CD14-positive monocyte (primary cell): ENCODE measurements at regions of chr2 and their contacts with region 1.

Region 1: GRCh38 chr2:47906157-47907038 is at the start of gene FBXO11:
- DNase-seq: peak; percentile 94 to 97 (median 97)
- H3K4me3 ChIP-seq: peak within 1 kb of the TSS; percentile 75 to 98 (median 90)
- H3K4me3 Mint-ChIP-seq: peak within 1 kb of the TSS; percentile 86 to 95
- H3K27ac ChIP-seq: peak within 1 kb of the TSS; percentile 90 to 95
- H3K27ac Mint-ChIP-seq: peak within 1 kb of the TSS; percentile 93 to 99 (median 97)
- H3K4me1 ChIP-seq: peaks cover 17 to 37% of the 10 kb centered on the region in 2 donors
- H3K4me1 Mint-ChIP-seq: peaks cover 36% of the 10 kb centered on the region
- H3K27me3 ChIP-seq: no peaks in the 10 kb centered on the region
- H3K27me3 Mint-ChIP-seq: peaks cover 0 to 2% (median 1%) of the 10 kb centered on the region in 3 donors
- CTCF ChIP-seq: no peak
- polyA plus RNA-seq, gene FBXO11: 2.2 to 51.3 (median 4.6) TPM

Region 2: GRCh38 chr2:47782671-47783485 is 123.5 kb before region 1 on chr2 and contains the start of gene MSH6:
- intact Hi-C with region 1: loop called (anchors 5 kb)
- DNase-seq: peak; percentile 78 to 88 (median 87)
- H3K4me3 ChIP-seq: peak within 1 kb of the TSS; percentile 82 to 91 (median 89)
- H3K4me3 Mint-ChIP-seq: peak within 1 kb of the TSS; percentile 84 to 92
- H3K27ac ChIP-seq: peak within 1 kb of the TSS; percentile 59 to 88
- H3K27ac Mint-ChIP-seq: peak within 1 kb of the TSS; percentile 78 to 93 (median 88)
- H3K4me1 ChIP-seq: peaks cover 35 to 39% of the 10 kb centered on the region in 2 donors
- H3K4me1 Mint-ChIP-seq: peaks cover 34% of the 10 kb centered on the region
- H3K27me3 ChIP-seq: no peaks in the 10 kb centered on the region
- H3K27me3 Mint-ChIP-seq: peaks cover 0 to 7% (median 0%) of the 10 kb centered on the region in 3 donors
- CTCF ChIP-seq: no peak
- polyA plus RNA-seq, gene MSH6: 4.1 to 6.5 (median 6.0) TPM

Region 3: GRCh38 chr2:47862949-47863348 is 43.4 kb before region 1 on chr2:
- intact Hi-C with region 1: loop called in 1 of 2 experiments (anchors 5 kb)
- DNase-seq: no peak
- H3K4me3 ChIP-seq: no peak overlapping the region
- H3K4me3 Mint-ChIP-seq: no peak overlapping the region
- H3K27ac ChIP-seq: no peak overlapping the region
- H3K27ac Mint-ChIP-seq: peak overlapping the region in 1 of 7 donors; percentile 37
- H3K4me1 ChIP-seq: peaks cover 5 to 11% of the 10 kb centered on the region in 2 donors
- H3K4me1 Mint-ChIP-seq: peaks cover 19% of the 10 kb centered on the region
- H3K27me3 ChIP-seq: no peaks in the 10 kb centered on the region
- H3K27me3 Mint-ChIP-seq: no peaks in the 10 kb centered on the region
- CTCF ChIP-seq: no peak

Region 4: DNA sequence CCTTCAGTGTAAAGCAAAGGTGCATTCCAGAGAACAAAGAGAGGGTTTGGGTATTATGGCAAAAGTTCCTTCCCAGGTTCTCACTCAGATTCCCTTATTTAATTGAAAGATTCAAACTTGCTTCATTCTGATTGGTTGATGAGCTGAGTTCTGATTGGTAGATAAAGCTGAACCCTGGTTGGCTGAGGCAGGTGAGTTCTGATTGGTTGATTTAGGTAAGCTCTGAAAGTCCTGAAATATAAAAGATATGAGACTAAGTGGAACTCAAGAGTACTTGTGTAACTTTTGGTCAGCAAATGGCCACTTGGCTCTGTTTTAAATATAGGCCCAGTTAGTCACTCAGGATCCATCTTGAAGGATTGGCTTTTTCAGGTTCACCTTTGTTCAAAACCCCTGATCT is 99.7 kb after region 1 on chr2:
- intact Hi-C with region 1: no loop called
- DNase-seq: no peak
- H3K4me3 ChIP-seq: no peak overlapping the region
- H3K4me3 Mint-ChIP-seq: no peak overlapping the region
- H3K27ac ChIP-seq: no peak overlapping the region
- H3K27ac Mint-ChIP-seq: no peak overlapping the region
- H3K4me1 ChIP-seq: no peaks in the 10 kb centered on the region
- H3K4me1 Mint-ChIP-seq: no peaks in the 10 kb centered on the region
- H3K27me3 ChIP-seq: no peaks in the 10 kb centered on the region
- H3K27me3 Mint-ChIP-seq: peaks cover 0 to 6% (median 3%) of the 10 kb centered on the region in 3 donors
- CTCF ChIP-seq: no peak

Region 5: DNA sequence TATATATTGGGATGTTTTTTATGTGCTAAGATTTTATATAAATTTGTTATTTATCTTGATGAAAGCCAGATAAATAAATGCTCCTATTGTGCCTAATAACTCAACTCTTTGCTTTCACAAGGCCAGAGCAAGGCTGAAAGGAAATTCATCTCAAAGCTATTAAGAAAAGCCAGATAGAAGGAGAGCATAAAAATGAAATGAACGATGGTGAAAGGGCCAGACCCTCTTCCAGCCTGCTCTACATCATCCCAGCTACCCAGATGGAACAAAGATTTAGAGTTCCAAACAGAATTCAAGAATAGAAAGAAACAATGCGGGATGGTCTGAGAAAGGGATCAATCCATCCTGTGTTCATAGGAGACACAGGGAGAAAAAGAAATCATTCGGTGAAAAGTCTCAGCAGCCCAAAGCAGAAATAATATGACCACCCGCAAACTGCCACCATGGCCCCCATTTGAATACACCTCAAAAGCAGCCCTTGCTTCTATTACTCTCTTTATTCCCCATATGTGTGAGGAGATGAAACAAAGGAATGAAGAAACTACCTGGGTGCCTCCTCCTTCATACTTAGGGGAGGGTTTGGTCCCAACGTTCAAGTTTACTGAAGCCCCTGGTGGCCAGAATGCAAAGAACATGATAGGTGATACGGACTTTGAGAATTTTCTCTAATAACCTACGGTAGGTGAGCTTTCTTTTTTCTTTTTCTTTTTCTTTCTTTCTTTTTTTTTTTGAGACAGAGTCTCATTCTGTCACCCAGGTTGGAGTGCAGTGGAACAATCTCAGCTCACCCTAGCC is 110.0 kb after region 1 on chr2:
- intact Hi-C with region 1: no loop called
- DNase-seq: no peak
- H3K4me3 ChIP-seq: no peak overlapping the region
- H3K4me3 Mint-ChIP-seq: no peak overlapping the region
- H3K27ac ChIP-seq: no peak overlapping the region
- H3K27ac Mint-ChIP-seq: no peak overlapping the region
- H3K4me1 ChIP-seq: no peaks in the 10 kb centered on the region
- H3K4me1 Mint-ChIP-seq: no peaks in the 10 kb centered on the region
- H3K27me3 ChIP-seq: peaks cover 0 to 2% of the 10 kb centered on the region in 2 donors
- H3K27me3 Mint-ChIP-seq: peaks cover 0 to 6% (median 0%) of the 10 kb centered on the region in 3 donors
- CTCF ChIP-seq: peak; percentile 30

Region 6: GRCh38 chr2:48107326-48107925 is 201.0 kb after region 1 on chr2:
- intact Hi-C with region 1: loop called in 1 of 2 experiments (anchors 5 kb)
- DNase-seq: peak in 2 of 3 donors; percentile 43 to 72
- H3K4me3 ChIP-seq: no peak overlapping the region
- H3K4me3 Mint-ChIP-seq: no peak overlapping the region
- H3K27ac ChIP-seq: peak overlapping the region in 1 of 2 donors; percentile 6
- H3K27ac Mint-ChIP-seq: peak overlapping the region in 6 of 7 donors; percentile 0 to 78 (median 39)
- H3K4me1 ChIP-seq: peaks cover 35 to 52% of the 10 kb centered on the region in 2 donors
- H3K4me1 Mint-ChIP-seq: peaks cover 47% of the 10 kb centered on the region
- H3K27me3 ChIP-seq: no peaks in the 10 kb centered on the region
- H3K27me3 Mint-ChIP-seq: no peaks in the 10 kb centered on the region
- CTCF ChIP-seq: no peak

Region 7: GRCh38 chr2:48439102-48439501 is 532.7 kb after region 1 on chr2:
- intact Hi-C with region 1: loop called in 1 of 2 experiments (anchors 5 kb)
- DNase-seq: no peak
- H3K4me3 ChIP-seq: no peak overlapping the region
- H3K4me3 Mint-ChIP-seq: no peak overlapping the region
- H3K27ac ChIP-seq: no peak overlapping the region
- H3K27ac Mint-ChIP-seq: no peak overlapping the region
- H3K4me1 ChIP-seq: peaks cover 47 to 62% of the 10 kb centered on the region in 2 donors
- H3K4me1 Mint-ChIP-seq: peaks cover 36% of the 10 kb centered on the region
- H3K27me3 ChIP-seq: no peaks in the 10 kb centered on the region
- H3K27me3 Mint-ChIP-seq: peaks cover 0 to 2% (median 0%) of the 10 kb centered on the region in 3 donors
- CTCF ChIP-seq: no peak